ENCODE measurements at regions of chr5 and their contacts with region 1.

Region 1: DNA sequence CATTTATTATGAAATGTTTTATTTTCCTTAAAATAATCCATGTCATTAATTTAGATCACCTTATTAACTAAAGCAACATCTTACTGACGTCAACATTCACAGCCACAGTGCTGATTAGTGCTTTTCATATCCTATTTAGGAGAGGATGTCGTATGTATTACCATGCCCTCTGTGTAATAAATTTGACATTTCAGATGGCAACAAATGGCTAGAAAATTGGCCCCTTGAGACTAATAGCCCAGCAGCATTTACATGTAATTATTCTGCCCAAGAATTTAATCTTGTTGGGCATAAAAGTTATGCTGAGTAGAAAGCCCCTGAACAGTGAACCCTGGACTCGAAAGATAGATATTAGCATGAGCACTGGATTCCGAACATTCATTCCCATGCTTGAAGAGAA is 391.2 kb downstream of the PRELID2 start:
- DNase-seq: no peak
- H3K4me3 ChIP-seq: no peak overlapping the region
- H3K27ac ChIP-seq: no peak overlapping the region
- H3K4me1 ChIP-seq: peaks cover 26% of the 10 kb centered on the region
- H3K27me3 ChIP-seq: no peaks in the 10 kb centered on the region
- CTCF ChIP-seq: no peak

Region 2: DNA sequence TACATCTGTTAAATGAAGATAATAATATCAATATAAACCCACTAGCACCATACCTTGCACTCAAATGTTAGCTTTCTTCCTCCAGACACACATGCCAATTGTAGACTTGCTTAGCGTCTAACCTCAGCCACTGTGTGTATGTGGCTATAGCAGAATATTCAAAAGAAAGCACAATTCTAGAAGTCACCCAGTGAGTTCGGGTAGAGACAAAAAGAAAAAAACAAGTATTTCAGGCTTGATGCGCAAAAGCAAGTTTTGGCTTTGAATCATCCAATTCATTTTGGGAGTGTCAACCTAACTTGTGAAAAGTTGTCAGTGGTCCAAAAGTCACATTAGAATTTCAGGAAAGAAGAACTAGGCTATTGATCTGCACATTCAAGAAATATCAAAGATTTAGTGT is 223.8 kb after region 1 on chr5:
- CTCF ChIA-PET with region 1: no interaction called
- POLR2A ChIA-PET with region 1: interaction called, 11 read pairs
- intact Hi-C with region 1: no loop called
- DNase-seq: no peak
- H3K4me3 ChIP-seq: no peak overlapping the region
- H3K27ac ChIP-seq: no peak overlapping the region
- H3K4me1 ChIP-seq: no peaks in the 10 kb centered on the region
- H3K27me3 ChIP-seq: no peaks in the 10 kb centered on the region
- CTCF ChIP-seq: no peak